Naive thymus-derived CD8-positive, alpha-beta T cell (primary cell): ENCODE measurements at regions of chr5 and their contacts with region 1.

Region 1: DNA sequence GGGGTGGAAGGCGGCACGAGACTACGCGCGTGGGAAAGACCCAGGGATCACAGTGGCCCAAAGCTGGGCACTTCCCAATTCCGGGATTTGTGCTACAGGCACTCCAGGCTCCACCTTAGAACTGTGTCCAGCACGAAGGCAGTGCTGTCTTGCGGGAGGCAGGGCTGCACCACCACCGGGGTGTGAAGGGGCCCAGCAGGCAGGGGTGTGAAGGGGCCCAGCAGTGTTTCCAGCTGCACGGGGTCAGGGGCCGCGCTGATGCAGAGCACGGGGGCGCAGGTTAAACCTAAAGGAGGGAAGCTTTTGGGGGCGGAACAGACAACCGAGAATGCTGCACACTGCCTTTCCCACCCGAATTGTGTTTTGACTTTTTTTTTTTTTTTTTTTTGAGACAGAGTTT is 1.1 kb upstream of the PDCD6 start:
- DNase-seq: no peak
- ATAC-seq: no peak
- H3K4me3 Mint-ChIP-seq: peak overlapping the region; percentile 69 to 98 (median 92)
- H3K27ac Mint-ChIP-seq: peak overlapping the region; percentile 70 to 97 (median 89)
- H3K4me1 Mint-ChIP-seq: peaks cover 13 to 44% (median 34%) of the 10 kb centered on the region in 4 donors
- H3K27me3 Mint-ChIP-seq: no peaks in the 10 kb centered on the region

Region 2: DNA sequence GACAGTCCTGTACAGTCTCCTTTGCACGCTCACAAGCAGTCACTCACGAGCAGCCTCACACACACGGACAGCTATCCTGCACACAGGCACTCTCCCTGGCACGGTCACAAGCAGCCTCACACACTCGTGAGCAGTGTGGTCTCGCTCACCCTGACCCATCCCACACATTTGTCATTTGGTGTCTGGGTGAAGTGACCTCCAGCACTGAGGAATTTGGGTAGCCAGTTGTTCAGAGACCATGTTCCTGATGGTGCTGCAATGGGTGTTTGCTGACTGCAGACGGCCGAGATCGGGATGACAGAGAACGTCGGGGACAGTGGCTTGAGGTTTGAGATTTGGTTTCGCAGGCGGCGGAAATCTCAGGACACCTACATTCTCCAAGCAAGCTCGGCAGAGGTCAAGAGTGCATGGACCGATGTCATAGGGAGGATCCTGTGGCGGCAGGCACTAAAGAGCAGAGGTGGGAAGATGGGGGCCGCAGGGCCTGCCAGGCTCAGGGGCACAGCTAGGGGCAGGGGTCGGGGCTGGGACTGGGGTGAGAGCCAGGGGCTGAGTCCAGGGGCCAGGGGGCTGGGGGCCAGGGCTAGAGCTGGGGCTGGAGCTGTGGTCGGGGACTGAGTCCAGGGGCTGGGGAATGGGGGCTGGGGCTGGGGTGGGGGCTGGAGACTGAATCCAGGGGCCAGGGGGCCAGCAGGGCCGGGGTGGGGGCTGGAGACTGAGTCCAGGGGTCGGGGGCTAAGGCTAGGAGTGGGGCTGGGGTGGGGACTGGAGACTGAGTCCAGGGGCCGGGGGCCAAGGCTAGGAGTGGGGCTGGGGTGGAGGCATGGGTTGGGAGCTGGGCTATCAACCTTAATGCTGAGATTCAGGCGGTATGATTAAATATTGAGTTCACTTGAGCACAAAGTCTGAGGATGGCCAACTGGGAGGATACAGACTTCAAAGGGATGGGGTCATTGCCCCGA is 96.4 kb before region 1 on chr5:
- POLR2A ChIA-PET with region 1: no interaction called
- DNase-seq: no peak
- ATAC-seq: no peak
- H3K4me3 Mint-ChIP-seq: no peak overlapping the region
- H3K27ac Mint-ChIP-seq: no peak overlapping the region
- H3K4me1 Mint-ChIP-seq: no peaks in the 10 kb centered on the region
- H3K27me3 Mint-ChIP-seq: peaks cover 0 to 2% (median 0%) of the 10 kb centered on the region in 5 donors

Region 3: GRCh38 chr5:217860-218456 is 52.4 kb before region 1 on chr5 and contains the starts of genes CCDC127 and SDHA:
- POLR2A ChIA-PET with region 1: interaction called, 32 read pairs
- DNase-seq: peak; percentile 95 to 100 (median 99)
- ATAC-seq: peak; percentile 86 to 89
- H3K4me3 Mint-ChIP-seq: peak within 1 kb of the TSS; percentile 90 to 97 (median 95)
- H3K27ac Mint-ChIP-seq: peak within 1 kb of the TSS; percentile 86 to 98 (median 96)
- H3K4me1 Mint-ChIP-seq: peaks cover 17 to 66% (median 62%) of the 10 kb centered on the region in 4 donors
- H3K27me3 Mint-ChIP-seq: no peaks in the 10 kb centered on the region
- polyA plus RNA-seq, gene CCDC127: 3.2 to 4.4 (median 3.5) TPM
- polyA plus RNA-seq, gene SDHA: 160 to 200 (median 165) TPM

Region 4: DNA sequence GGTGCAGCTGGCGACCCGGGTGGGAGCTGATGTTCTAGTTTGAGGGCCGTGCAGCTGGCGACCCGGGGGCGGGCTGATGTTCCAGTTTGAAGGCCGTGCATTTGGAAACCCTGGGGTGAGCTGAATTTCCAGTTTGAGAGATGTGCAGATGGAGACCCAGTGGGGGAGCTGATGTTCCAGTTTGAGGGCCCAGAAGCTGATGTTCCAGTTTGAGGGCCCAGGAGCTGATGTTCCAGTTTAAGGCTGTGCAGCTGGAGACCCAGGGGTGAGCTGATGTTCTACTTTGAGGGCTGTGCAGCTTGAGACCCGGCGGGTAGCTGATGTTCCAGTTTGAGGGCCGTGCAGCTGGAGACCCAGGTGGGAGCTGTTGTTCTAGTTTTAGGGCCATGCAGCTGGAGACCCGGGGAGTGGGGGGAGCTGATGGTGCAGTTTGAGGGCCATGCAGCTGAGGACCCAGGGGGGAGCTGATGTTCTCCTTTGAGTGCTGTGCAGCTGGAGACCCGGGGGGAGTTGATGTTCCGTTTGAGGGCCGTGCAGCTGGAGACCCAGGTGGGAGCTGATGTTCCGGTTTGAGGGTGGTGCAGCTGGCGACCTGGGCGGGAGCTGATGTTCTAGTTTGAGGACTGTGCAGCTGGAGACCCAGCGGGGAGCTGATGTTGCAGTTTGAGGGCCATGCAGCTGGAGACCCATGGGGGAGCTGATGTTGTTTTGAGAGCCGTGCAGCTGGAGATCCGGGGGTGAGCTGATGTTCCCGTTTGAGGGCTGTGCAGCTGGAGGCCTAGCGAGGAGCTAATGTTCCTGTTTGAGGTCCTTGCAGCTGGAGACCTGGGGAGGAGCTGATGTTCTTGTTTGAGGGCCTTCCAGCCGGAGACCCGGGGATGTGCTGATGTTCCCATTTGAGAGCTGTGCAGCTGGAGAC is 15.6 kb after region 1 on chr5:
- POLR2A ChIA-PET with region 1: interaction called, 11 read pairs
- DNase-seq: no peak
- ATAC-seq: no peak
- H3K4me3 Mint-ChIP-seq: peak overlapping the region in 1 of 10 donors; percentile 51
- H3K27ac Mint-ChIP-seq: peak overlapping the region in 1 of 10 donors; percentile 84
- H3K4me1 Mint-ChIP-seq: peaks cover 42 to 57% (median 52%) of the 10 kb centered on the region in 4 donors
- H3K27me3 Mint-ChIP-seq: no peaks in the 10 kb centered on the region